ENCODE measurements at regions of chr9 and their contacts with region 1.

Region 1: GRCh38 chr9:36166101-36166927 is 2.9 kb upstream of the CCIN start:
- DNase-seq: peak; percentile 88
- ATAC-seq: peak; percentile 98
- H3K4me3 Mint-ChIP-seq: peak overlapping the region; percentile 64
- H3K27ac Mint-ChIP-seq: peak overlapping the region; percentile 46
- H3K4me1 Mint-ChIP-seq: peaks cover 7% of the 10 kb centered on the region
- H3K27me3 Mint-ChIP-seq: peaks cover 25% of the 10 kb centered on the region

Region 2: GRCh38 chr9:36092509-36093215 is 73.7 kb before region 1 on chr9:
- CTCF ChIA-PET with region 1: interaction called, 295 read pairs
- DNase-seq: peak; percentile 82
- ATAC-seq: peak; percentile 100
- H3K4me3 Mint-ChIP-seq: peak overlapping the region; percentile 10
- H3K27ac Mint-ChIP-seq: peak overlapping the region; percentile 90
- H3K4me1 Mint-ChIP-seq: peaks cover 17% of the 10 kb centered on the region
- H3K27me3 Mint-ChIP-seq: peaks cover under 1% of the 10 kb centered on the region

Region 3: DNA sequence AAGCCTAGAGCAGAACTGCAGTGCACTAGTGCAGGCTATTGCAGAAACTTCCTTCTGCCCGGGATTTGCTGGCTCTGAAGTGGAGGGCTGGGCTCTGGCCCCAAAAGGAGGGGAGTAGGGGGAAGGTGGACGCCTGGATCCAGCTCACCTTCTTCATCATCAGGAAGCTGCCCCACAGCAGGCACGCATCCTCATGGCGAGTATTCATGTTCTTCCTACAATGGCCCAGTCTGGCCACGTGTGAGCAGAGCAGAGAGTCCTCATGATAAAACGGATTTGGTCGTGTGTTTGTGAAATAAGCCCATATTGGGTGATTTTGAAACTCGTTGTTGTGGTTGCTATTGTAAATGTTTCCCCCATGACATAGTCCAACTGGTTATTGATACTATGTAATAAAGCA is 38.0 kb before region 1 on chr9:
- CTCF ChIA-PET with region 1: interaction called, 13 read pairs
- DNase-seq: no peak
- ATAC-seq: no peak
- H3K4me3 Mint-ChIP-seq: no peak overlapping the region
- H3K27ac Mint-ChIP-seq: peak overlapping the region; percentile 53
- H3K4me1 Mint-ChIP-seq: peaks cover 22% of the 10 kb centered on the region
- H3K27me3 Mint-ChIP-seq: peaks cover 4% of the 10 kb centered on the region

Region 4: GRCh38 chr9:36148311-36149051 is 17.8 kb before region 1 on chr9:
- CTCF ChIA-PET with region 1: interaction called, 33 read pairs
- DNase-seq: peak; percentile 92
- ATAC-seq: peak; percentile 43
- H3K4me3 Mint-ChIP-seq: no peak overlapping the region
- H3K27ac Mint-ChIP-seq: peak overlapping the region; percentile 69
- H3K4me1 Mint-ChIP-seq: peaks cover 90% of the 10 kb centered on the region
- H3K27me3 Mint-ChIP-seq: no peaks in the 10 kb centered on the region

Region 5: GRCh38 chr9:36190388-36191287 is 24.3 kb after region 1 on chr9 and contains the start of gene CLTA:
- CTCF ChIA-PET with region 1: interaction called, 14 read pairs
- DNase-seq: peak; percentile 98
- ATAC-seq: peak; percentile 98
- H3K4me3 Mint-ChIP-seq: peak within 1 kb of the TSS; percentile 99
- H3K27ac Mint-ChIP-seq: peak within 1 kb of the TSS; percentile 93
- H3K4me1 Mint-ChIP-seq: peaks cover 59% of the 10 kb centered on the region
- H3K27me3 Mint-ChIP-seq: peaks cover 3% of the 10 kb centered on the region
- total RNA-seq, gene CLTA: 156 to 177 TPM

Region 6: GRCh38 chr9:36214571-36214970 is 48.3 kb after region 1 on chr9:
- CTCF ChIA-PET with region 1: no interaction called
- DNase-seq: no peak
- ATAC-seq: no peak
- H3K4me3 Mint-ChIP-seq: no peak overlapping the region
- H3K27ac Mint-ChIP-seq: peak overlapping the region; percentile 4
- H3K4me1 Mint-ChIP-seq: peaks cover 58% of the 10 kb centered on the region
- H3K27me3 Mint-ChIP-seq: no peaks in the 10 kb centered on the region